ENCODE measurements at regions of chr19 and their contacts with region 1.

Region 1: GRCh38 chr19:45125926-45126493 is 33.0 kb downstream of the PPP1R37 start:
- DNase-seq: peak; percentile 46 to 79 (median 68)
- ATAC-seq: peak; percentile 95
- H3K4me3 ChIP-seq: no peak overlapping the region
- H3K4me3 Mint-ChIP-seq: no peak overlapping the region
- H3K27ac ChIP-seq: no peak overlapping the region
- H3K27ac Mint-ChIP-seq: no peak overlapping the region
- H3K4me1 ChIP-seq: peaks cover 29% of the 10 kb centered on the region
- H3K4me1 Mint-ChIP-seq: peaks cover 27% of the 10 kb centered on the region
- H3K27me3 ChIP-seq: no peaks in the 10 kb centered on the region
- H3K27me3 Mint-ChIP-seq: no peaks in the 10 kb centered on the region
- CTCF ChIP-seq: peak; percentile 68

Region 2: DNA sequence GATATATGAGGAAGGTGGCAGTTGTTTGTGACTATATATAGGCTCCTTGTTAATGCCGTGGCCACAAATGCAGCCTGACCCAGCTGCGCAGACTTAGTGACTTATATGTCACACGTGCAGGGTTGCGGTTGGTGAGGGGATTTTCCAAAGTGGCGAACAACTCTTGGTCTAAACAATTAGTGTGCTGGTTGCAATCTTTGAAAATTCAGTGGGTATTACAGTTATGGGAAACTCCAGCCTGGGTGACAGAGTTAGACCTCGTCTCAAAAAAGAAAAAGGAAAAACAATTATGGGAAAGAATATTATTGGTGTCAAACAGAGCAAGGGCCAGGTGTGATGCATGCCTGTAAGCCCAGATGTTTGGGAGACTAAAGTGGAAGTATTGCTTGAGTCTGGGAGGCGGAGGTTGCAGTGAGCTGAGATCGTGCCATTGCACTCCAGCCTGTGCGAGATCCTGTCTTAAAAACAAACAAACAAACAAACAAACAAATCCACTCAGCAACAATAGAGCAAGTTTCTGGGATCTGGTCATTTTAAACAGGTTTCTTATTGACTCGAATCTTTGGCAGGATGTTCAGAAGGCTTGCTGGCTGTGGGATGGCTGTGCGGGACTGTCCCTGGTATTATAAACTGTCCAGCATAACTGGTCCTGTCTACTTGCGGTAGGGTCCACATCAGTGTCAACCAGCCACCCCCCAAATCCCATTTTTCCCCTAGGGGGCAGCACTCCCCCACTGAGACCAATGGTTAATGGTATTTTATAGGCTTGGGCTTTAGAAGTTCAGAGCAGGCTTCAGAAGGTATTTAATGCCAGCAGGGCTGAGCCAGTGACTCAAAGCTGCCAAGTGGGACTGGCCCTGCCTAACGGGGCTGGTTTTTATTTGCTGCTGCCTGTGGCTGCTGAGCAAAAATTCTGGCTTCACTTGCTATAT is 109.4 kb before region 1 on chr19:
- CTCF ChIA-PET with region 1: interaction called, 4 read pairs
- POLR2A ChIA-PET with region 1: no interaction called
- intact Hi-C with region 1: loop called in 1 of 2 experiments (anchors 5 kb)
- DNase-seq: peak; percentile 54 to 95 (median 73)
- ATAC-seq: peak; percentile 85
- H3K4me3 ChIP-seq: peak overlapping the region in 1 of 2 experiments; percentile 9
- H3K4me3 Mint-ChIP-seq: peak overlapping the region; percentile 42
- H3K27ac ChIP-seq: peak overlapping the region; percentile 44 to 82
- H3K27ac Mint-ChIP-seq: peak overlapping the region; percentile 87
- H3K4me1 ChIP-seq: peaks cover 3% of the 10 kb centered on the region
- H3K4me1 Mint-ChIP-seq: peaks cover 13% of the 10 kb centered on the region
- H3K27me3 ChIP-seq: no peaks in the 10 kb centered on the region
- H3K27me3 Mint-ChIP-seq: no peaks in the 10 kb centered on the region
- CTCF ChIP-seq: peak; percentile 68

Region 3: GRCh38 chr19:45027371-45027770 is 98.6 kb before region 1 on chr19:
- CTCF ChIA-PET with region 1: no interaction called
- POLR2A ChIA-PET with region 1: no interaction called
- intact Hi-C with region 1: no loop called
- DNase-seq: no peak
- ATAC-seq: no peak
- H3K4me3 ChIP-seq: no peak overlapping the region
- H3K4me3 Mint-ChIP-seq: no peak overlapping the region
- H3K27ac ChIP-seq: no peak overlapping the region
- H3K27ac Mint-ChIP-seq: no peak overlapping the region
- H3K4me1 ChIP-seq: no peaks in the 10 kb centered on the region
- H3K4me1 Mint-ChIP-seq: no peaks in the 10 kb centered on the region
- H3K27me3 ChIP-seq: no peaks in the 10 kb centered on the region
- H3K27me3 Mint-ChIP-seq: no peaks in the 10 kb centered on the region
- CTCF ChIP-seq: no peak

Region 4: DNA sequence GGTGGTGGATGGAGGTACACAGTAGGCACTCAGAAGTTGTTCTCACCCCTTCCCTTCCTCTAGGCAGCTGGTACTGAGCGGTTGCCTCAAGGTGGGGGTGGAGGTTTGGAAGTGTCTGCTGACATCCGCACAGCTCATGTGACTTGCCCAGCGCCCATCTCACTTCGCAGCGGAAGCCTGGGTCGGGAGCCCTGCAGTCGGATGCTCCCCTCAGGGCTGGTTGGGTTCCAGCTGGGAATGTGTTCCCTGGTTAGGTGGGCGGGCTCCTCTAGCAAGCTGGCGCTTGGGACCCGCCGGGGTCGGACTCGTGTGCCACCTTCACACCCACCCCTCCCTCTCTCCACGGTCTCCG is 22.9 kb before region 1 on chr19:
- CTCF ChIA-PET with region 1: interaction called, 19 read pairs
- POLR2A ChIA-PET with region 1: no interaction called
- intact Hi-C with region 1: loop called (anchors 1 to 2 kb)
- DNase-seq: peak in 7 of 9 experiments; percentile 19 to 80 (median 60)
- ATAC-seq: peak; percentile 87
- H3K4me3 ChIP-seq: peak overlapping the region; percentile 20 to 49
- H3K4me3 Mint-ChIP-seq: peak overlapping the region; percentile 70
- H3K27ac ChIP-seq: peak overlapping the region; percentile 41 to 74
- H3K27ac Mint-ChIP-seq: peak overlapping the region; percentile 74
- H3K4me1 ChIP-seq: peaks cover 43% of the 10 kb centered on the region
- H3K4me1 Mint-ChIP-seq: peaks cover 72% of the 10 kb centered on the region
- H3K27me3 ChIP-seq: no peaks in the 10 kb centered on the region
- H3K27me3 Mint-ChIP-seq: no peaks in the 10 kb centered on the region
- CTCF ChIP-seq: no peak

Region 5: GRCh38 chr19:45137179-45137761 is 11.3 kb after region 1 on chr19:
- CTCF ChIA-PET with region 1: interaction called, 16 read pairs
- POLR2A ChIA-PET with region 1: no interaction called
- intact Hi-C with region 1: no loop called
- DNase-seq: no peak
- ATAC-seq: no peak
- H3K4me3 ChIP-seq: no peak overlapping the region
- H3K4me3 Mint-ChIP-seq: no peak overlapping the region
- H3K27ac ChIP-seq: no peak overlapping the region
- H3K27ac Mint-ChIP-seq: no peak overlapping the region
- H3K4me1 ChIP-seq: no peaks in the 10 kb centered on the region
- H3K4me1 Mint-ChIP-seq: peaks cover 5% of the 10 kb centered on the region
- H3K27me3 ChIP-seq: no peaks in the 10 kb centered on the region
- H3K27me3 Mint-ChIP-seq: no peaks in the 10 kb centered on the region
- CTCF ChIP-seq: no peak